Breast epithelium (tissue), 4 donors: ENCODE measurements at regions of chr22 and their contacts with region 1.

Region 1: GRCh38 chr22:35014812-35015211 is 51.1 kb upstream of the ISX start:
- DNase-seq: no peak
- H3K4me3 ChIP-seq: no peak overlapping the region
- H3K27ac ChIP-seq: no peak overlapping the region
- H3K4me1 ChIP-seq: no peaks in the 10 kb centered on the region
- H3K27me3 ChIP-seq: peaks cover 0 to 15% of the 10 kb centered on the region in 2 donors
- CTCF ChIP-seq: no peak
- POLR2A ChIP-seq: no peak

Region 2: GRCh38 chr22:33274214-33275072 is 1740.4 kb before region 1 on chr22:
- intact Hi-C with region 1: loop called (anchors 5 kb)
- DNase-seq: no peak
- H3K4me3 ChIP-seq: no peak overlapping the region
- H3K27ac ChIP-seq: no peak overlapping the region
- H3K4me1 ChIP-seq: no peaks in the 10 kb centered on the region
- H3K27me3 ChIP-seq: no peaks in the 10 kb centered on the region
- CTCF ChIP-seq: no peak
- POLR2A ChIP-seq: no peak

Region 3: DNA sequence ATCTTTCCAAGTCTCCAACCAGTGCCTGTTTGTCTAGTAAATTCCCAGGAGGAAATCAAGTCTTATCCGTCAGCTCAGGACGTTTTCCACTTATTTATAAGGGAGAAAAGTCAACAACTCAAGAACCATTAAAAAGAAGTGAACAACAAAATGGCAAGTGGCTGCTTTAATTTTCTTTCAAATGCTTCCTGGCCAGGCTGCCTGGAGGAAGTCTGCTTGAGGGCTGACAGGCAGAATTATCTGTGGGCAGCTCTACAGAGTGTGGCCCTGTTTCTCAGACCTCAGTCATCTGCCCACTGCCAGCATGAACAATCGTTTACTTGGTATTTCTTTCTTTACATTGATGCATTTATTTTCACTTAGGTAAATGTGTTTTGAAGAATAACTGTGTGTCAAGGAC is 230.8 kb before region 1 on chr22:
- intact Hi-C with region 1: no loop called
- DNase-seq: no peak
- H3K4me3 ChIP-seq: no peak overlapping the region
- H3K27ac ChIP-seq: no peak overlapping the region
- H3K4me1 ChIP-seq: no peaks in the 10 kb centered on the region
- H3K27me3 ChIP-seq: no peaks in the 10 kb centered on the region
- CTCF ChIP-seq: no peak
- POLR2A ChIP-seq: no peak